Stomach (tissue), 19 donors: ENCODE measurements at regions of chr4 and their contacts with region 1.

Region 1: DNA sequence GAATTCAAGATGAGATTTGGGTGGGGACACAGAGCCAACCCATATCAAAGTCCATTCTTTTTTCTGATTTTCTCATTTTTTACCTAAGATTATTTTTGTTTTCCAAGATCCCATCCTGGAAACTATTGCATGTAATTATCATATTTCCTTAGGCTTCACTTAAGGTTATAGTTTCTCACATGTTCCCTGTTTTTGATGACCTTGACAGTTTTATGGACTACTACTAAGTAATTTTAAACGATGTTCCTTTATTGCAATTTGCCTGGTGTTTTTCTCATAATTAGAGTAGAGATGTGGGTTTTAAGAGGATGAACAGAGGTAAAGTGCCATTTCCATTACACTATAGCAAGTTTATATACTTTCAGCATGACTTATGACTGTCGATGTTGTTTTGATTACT is 795.1 kb downstream of the FAT4 start:
- DNase-seq: no peak
- H3K4me3 ChIP-seq: no peak overlapping the region
- H3K27ac ChIP-seq: no peak overlapping the region
- H3K4me1 ChIP-seq: no peaks in the 10 kb centered on the region
- H3K27me3 ChIP-seq: no peaks in the 10 kb centered on the region
- CTCF ChIP-seq: no peak
- EP300 ChIP-seq: no peak
- POLR2A ChIP-seq: no peak

Region 2: DNA sequence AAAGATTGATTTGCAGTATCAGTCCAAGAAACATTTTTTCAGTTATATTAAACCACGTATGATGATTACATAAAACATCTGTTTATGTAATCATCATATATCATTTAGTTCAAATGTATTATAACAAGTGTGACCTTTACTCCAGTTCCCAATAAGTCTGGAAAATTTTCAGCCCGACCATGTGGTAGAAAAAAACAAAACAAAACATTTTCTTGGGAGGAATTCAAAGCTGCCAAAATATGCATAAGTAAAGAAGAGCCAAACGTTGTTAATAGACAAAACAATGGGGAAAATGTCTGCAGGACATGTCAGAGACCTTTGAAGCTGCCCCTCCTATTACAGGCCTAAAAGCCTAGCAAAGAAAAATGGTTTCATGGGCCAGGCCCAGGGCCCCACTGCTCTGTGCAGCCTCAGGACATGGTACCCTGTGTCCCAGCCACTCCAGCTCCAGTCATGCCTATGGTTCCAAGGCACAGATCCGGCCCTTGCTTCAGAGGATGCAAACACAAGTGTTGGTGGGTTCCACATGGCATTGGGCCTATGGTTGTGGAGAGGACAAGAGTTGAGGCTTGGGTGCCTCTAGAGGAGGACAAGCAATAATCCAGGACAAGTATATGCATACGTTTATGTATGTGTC is 85.8 kb before region 1 on chr4:
- intact Hi-C with region 1: no loop called
- DNase-seq: peak in 1 of 2 donors; percentile 49
- H3K4me3 ChIP-seq: no peak overlapping the region
- H3K27ac ChIP-seq: no peak overlapping the region
- H3K4me1 ChIP-seq: peaks cover 0 to 9% (median 0%) of the 10 kb centered on the region in 4 donors
- H3K27me3 ChIP-seq: no peaks in the 10 kb centered on the region
- CTCF ChIP-seq: no peak
- EP300 ChIP-seq: no peak
- POLR2A ChIP-seq: no peak

Region 3: GRCh38 chr4:126172126-126172525 is 62.3 kb after region 1 on chr4:
- intact Hi-C with region 1: no loop called
- DNase-seq: no peak
- H3K4me3 ChIP-seq: no peak overlapping the region
- H3K27ac ChIP-seq: no peak overlapping the region
- H3K4me1 ChIP-seq: no peaks in the 10 kb centered on the region
- H3K27me3 ChIP-seq: no peaks in the 10 kb centered on the region
- CTCF ChIP-seq: no peak
- EP300 ChIP-seq: no peak
- POLR2A ChIP-seq: no peak

Region 4: GRCh38 chr4:126718136-126718535 is 608.3 kb after region 1 on chr4:
- intact Hi-C with region 1: loop called (anchors 10 kb)
- DNase-seq: no peak
- H3K4me3 ChIP-seq: no peak overlapping the region
- H3K27ac ChIP-seq: no peak overlapping the region
- H3K4me1 ChIP-seq: no peaks in the 10 kb centered on the region
- H3K27me3 ChIP-seq: no peaks in the 10 kb centered on the region
- CTCF ChIP-seq: no peak
- EP300 ChIP-seq: no peak
- POLR2A ChIP-seq: no peak